ENCODE measurements at regions of chr12 and their contacts with region 1.

Region 1: DNA sequence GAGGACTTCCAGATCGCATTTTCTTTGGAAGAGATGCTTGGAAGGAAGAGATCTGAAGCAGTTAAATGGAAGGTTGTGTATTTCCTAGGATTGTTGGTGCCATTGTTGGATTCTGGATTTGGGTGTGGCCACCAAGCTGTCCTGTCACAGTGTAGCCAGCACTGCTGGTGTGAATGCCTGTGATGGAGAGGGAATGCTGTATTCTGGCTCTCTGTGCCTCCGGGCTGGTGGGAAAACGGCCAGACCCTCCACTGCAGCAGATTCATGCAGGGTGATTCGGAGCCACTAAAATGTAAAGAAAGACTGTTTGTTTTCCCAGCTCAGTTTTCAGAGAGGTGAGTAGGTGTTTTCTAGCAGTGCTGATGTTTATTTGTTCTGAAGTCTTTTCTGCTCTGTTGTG is 30.7 kb upstream of the MANSC4 start:
- DNase-seq: no peak
- H3K4me3 ChIP-seq: no peak overlapping the region
- H3K27me3 ChIP-seq: no peaks in the 10 kb centered on the region
- CTCF ChIP-seq: no peak

Region 2: DNA sequence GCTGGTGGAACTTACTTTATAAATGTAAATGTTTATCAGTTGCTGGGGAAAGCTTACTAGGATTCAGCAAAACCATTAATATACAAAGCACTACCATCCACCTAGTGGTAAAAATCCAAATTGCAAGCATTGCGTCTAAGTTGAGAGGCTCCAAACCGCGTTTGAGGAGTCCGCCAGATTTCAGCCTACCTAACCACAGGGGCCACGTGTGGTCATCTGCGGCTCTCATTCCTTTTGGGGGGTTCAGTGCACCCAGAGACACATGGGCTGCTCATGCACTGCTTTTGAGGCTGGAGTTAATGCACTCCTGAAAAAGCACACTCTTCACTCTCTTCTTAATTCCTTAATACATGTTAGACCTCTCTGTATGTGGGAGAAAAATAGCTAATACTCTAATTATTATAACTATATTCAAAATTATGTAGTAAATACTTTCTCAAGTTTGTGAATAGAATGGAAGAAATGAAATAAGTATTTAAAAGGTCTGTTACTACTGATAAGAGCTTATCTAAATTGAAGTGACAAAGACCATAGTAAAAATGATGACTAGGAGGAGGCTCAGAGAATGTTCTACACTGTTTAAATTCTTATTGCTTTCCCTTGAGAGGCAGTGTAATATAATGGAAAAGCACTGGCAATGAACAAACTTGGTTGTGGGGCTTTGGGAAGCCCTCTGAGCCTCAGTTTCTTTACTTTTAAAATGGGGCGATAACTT is 10.7 kb after region 1 on chr12:
- CTCF ChIA-PET with region 1: interaction called, 21 read pairs
- POLR2A ChIA-PET with region 1: no interaction called
- DNase-seq: peak; percentile 27
- H3K4me3 ChIP-seq: no peak overlapping the region
- H3K27me3 ChIP-seq: no peaks in the 10 kb centered on the region
- CTCF ChIP-seq: peak; percentile 77

Measured in BJ (cell line).